ENCODE measurements at regions of chr6 and their contacts with region 1.

Region 1: GRCh38 chr6:70884074-70884983 is 72.5 kb downstream of the B3GAT2 start:
- DNase-seq: no peak
- H3K4me3 ChIP-seq: no peak overlapping the region
- H3K27me3 ChIP-seq: peaks cover 5% of the 10 kb centered on the region
- CTCF ChIP-seq: peak; percentile 88

Region 2: GRCh38 chr6:70700922-70701876 is 183.1 kb before region 1 on chr6:
- CTCF ChIA-PET with region 1: interaction called, 56 read pairs
- POLR2A ChIA-PET with region 1: no interaction called
- DNase-seq: no peak
- H3K4me3 ChIP-seq: no peak overlapping the region
- H3K27me3 ChIP-seq: no peaks in the 10 kb centered on the region
- CTCF ChIP-seq: no peak

Region 3: DNA sequence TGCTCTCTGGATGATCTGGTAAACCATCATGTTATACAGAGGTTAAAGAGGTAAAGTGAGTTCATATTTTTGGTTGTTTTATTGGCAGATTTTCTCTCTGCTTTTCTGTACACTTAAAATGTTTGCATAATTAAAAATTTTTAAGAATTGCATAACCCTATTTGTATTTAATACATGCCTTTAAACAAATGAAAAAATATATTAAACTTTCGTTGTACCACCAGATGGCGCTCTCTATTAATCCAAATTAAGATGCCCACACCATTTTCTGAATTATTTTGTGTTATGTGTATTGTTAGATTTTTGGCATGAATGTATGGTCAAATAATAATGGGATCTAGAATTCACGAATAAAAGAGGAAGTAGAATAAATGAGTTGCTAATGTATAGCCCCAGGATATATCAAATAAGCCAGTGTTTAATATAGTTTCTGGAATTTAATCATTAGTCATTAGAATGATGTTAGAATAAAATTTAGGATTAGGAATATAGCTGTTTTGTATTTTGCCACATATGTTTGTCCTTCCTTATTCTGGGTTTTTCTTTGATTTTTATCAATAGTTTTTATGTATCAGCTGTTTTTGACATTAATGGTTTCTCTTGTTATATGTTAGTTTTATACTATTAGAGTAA is 177.7 kb before region 1 on chr6:
- CTCF ChIA-PET with region 1: interaction called, 96 read pairs
- POLR2A ChIA-PET with region 1: no interaction called
- DNase-seq: peak; percentile 5
- H3K4me3 ChIP-seq: no peak overlapping the region
- H3K27me3 ChIP-seq: no peaks in the 10 kb centered on the region
- CTCF ChIP-seq: peak; percentile 40

Region 4: DNA sequence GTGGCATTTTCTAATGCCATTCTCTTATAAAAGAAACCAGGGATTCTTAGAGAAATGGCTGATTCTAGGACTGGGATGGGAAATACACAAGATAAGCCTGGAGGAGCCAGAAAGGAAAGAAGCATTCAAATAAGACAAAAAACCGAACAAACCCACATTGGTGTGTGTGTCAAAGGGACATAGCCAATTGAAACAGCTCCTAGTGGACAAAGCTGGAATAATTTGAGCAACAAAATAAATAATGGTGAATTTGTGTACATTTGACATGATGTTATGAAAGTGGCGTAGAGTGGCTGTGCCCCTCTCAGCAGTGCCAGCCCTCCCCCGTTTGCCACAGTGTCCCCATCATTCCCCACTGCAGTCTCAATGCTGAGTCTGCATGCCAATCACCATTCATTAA is 17.0 kb after region 1 on chr6:
- CTCF ChIA-PET with region 1: interaction called, 31 read pairs
- POLR2A ChIA-PET with region 1: no interaction called
- DNase-seq: no peak
- H3K4me3 ChIP-seq: no peak overlapping the region
- H3K27me3 ChIP-seq: no peaks in the 10 kb centered on the region
- CTCF ChIP-seq: peak; percentile 33; the same call in 1 of the 2 replicates

Measured in BJ (cell line).